Sigmoid colon (tissue), 7 donors: ENCODE measurements at regions of chr20 and their contacts with region 1.

Region 1: DNA sequence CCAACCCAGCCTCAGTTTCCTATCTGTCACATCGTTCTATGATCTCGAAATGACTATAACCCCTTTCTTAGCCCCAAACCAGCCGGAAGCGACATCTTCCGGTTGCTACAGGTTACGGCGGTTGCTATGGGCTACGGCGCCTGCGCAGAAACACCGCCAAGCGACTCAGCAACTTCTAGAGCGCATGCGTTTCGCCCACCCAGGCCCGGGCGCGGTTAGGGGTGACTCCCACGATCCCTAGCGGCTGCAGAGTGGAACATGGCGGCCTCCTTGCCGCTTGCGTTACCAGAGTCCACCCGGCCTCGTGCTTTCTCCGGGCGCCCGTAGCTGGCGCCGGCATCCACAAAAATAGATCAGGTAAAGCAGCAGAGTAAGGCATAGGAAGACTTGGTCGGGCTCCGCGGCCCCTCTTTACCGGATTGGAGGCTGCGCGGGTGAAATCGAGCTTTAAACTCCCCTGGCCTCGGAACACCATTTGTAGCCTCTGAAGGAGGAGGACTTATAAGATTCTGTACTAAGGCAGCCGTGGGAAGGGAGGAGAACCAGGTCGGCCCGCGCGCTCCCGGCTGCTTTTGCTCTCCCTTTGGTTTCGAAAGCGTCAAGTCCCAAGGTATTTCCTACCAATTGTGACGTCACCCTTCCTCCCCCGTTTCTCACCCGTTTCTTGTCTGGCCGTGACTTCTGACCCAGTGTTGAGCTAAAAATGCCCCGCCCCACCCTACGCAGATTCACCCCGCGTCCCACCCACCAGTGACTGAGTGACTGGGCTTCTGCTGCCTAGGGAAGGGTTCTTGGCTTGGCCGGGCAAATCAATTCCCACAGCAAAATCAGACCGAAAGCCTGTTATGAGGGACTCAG is 3.5 kb downstream of the SDCBP2 start:
- DNase-seq: peak; percentile 99
- H3K4me3 ChIP-seq: peak overlapping the region; percentile 87 to 90 (median 89)
- H3K27ac ChIP-seq: peak overlapping the region; percentile 97 to 99 (median 98)
- H3K4me1 ChIP-seq: peaks cover 0 to 49% (median 47%) of the 10 kb centered on the region in 4 donors
- H3K27me3 ChIP-seq: no peaks in the 10 kb centered on the region
- CTCF ChIP-seq: peak in 3 of 4 experiments; percentile 27 to 43 (median 33)
- EP300 ChIP-seq: peak in 1 of 4 donors; percentile 79
- POLR2A ChIP-seq: peak; percentile 83 to 89

Region 2: DNA sequence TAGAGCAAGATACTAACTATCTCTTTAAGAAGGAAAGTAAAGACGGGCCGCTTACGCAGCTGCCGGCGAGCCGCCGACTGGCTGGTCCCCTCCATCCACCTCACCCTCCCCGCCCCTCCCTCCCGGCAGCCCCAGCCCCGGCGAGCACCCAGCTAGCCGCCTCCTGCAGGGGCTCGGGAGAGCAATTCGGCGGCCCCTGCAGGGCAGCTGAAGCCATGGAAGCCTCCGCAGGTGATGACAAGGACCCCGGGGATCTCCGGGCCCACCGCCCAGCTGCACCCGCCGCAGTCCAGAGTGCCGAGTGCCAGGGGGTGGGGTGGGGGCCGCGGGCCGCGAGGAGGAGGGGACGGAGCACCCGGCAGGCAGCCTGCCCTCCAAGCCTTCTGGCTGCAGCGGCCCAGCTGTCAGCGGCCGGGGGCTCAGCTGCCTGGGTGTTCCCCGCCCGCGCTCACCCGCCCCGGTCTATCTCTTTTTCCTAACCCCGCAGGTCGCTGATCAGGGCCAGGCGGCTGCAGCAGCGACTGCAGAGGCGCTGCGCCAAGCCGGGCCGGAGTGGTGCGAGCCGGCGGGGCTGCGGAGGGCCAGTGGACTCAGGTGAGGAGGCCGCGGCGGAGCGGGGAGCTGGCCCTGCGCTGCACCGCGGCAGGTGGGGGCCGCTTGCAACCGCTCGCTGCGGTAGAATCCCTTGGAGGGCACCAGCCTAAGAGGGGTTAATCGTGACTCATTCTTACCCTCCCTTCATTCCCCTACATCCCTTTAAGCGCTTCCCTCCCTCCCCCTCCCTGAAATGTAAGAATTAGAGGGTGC is 59.0 kb before region 1 on chr20 and contains the start of gene SNPH:
- intact Hi-C with region 1: loop called (anchors 2 kb)
- DNase-seq: peak; percentile 91
- H3K4me3 ChIP-seq: peak within 1 kb of the TSS; percentile 76 to 91 (median 88)
- H3K27ac ChIP-seq: peak within 1 kb of the TSS; percentile 73 to 87 (median 78)
- H3K4me1 ChIP-seq: peaks cover 0 to 22% (median 17%) of the 10 kb centered on the region in 4 donors
- H3K27me3 ChIP-seq: no peaks in the 10 kb centered on the region
- CTCF ChIP-seq: no peak
- EP300 ChIP-seq: no peak
- POLR2A ChIP-seq: no peak
- total RNA-seq, gene SNPH: 6.4 to 21.0 (median 8.9) TPM

Region 3: GRCh38 chr20:1291191-1291741 is 34.1 kb before region 1 on chr20:
- intact Hi-C with region 1: no loop called
- DNase-seq: no peak
- H3K4me3 ChIP-seq: no peak overlapping the region
- H3K27ac ChIP-seq: no peak overlapping the region
- H3K4me1 ChIP-seq: no peaks in the 10 kb centered on the region
- H3K27me3 ChIP-seq: no peaks in the 10 kb centered on the region
- CTCF ChIP-seq: no peak
- EP300 ChIP-seq: no peak
- POLR2A ChIP-seq: no peak

Region 4: DNA sequence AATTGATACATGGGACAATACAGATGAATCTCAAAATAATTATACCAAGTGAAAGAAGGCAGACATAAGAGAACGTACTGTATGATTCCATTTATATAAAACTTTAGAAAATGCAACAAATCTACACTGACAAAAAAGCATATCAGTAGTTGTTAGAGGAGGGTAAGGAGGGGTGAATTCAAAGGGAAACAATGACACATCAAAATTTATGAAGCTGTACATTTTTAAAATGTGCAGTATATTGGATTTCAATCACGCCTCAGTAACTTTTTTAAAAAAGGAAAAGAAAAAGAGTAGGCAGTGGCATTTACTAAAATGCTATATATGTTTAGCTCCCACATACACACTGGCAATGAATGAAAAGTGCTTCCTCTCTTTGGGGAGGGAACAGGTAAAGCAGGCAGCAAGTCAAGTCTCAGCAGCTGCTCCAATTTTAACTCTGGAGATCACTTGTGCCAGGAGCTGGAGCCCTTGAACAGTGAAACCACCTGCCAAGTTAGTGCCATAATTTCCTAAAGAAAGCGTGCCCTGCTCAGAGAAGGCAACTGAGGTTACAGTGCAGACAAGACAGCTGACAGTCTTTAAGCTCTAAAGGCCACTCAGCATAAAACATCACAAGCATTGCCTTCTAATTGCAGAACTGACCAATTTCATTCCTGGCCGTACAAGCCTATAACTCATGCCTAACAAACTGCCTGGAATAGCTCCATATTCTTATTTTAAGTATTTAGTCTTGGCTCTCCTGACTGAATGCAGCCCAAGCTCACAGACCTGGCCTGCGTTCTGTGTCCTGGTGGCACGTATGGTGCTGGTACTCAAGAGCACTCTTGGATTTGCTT is 56.6 kb after region 1 on chr20:
- intact Hi-C with region 1: loop called (anchors 2 kb)
- DNase-seq: no peak
- H3K4me3 ChIP-seq: no peak overlapping the region
- H3K27ac ChIP-seq: peak overlapping the region; percentile 46 to 67 (median 58)
- H3K4me1 ChIP-seq: peaks cover 0 to 72% (median 52%) of the 10 kb centered on the region in 4 donors
- H3K27me3 ChIP-seq: no peaks in the 10 kb centered on the region
- CTCF ChIP-seq: no peak
- EP300 ChIP-seq: no peak
- POLR2A ChIP-seq: no peak

Region 5: GRCh38 chr20:1392823-1393506 is 67.6 kb after region 1 on chr20 and contains the start of gene FKBP1A:
- intact Hi-C with region 1: loop called (anchors 1 kb)
- DNase-seq: peak; percentile 96
- H3K4me3 ChIP-seq: peak within 1 kb of the TSS; percentile 62 to 89 (median 83)
- H3K27ac ChIP-seq: peak within 1 kb of the TSS; percentile 81 to 83 (median 82)
- H3K4me1 ChIP-seq: peaks cover 0 to 53% (median 45%) of the 10 kb centered on the region in 4 donors
- H3K27me3 ChIP-seq: peaks cover 0 to 9% (median 0%) of the 10 kb centered on the region in 3 donors
- CTCF ChIP-seq: peak in 1 of 4 experiments; percentile 16
- EP300 ChIP-seq: no peak
- POLR2A ChIP-seq: peak; percentile 35 to 40
- total RNA-seq, gene FKBP1A: 71.7 to 118 (median 85.3) TPM

Region 6: GRCh38 chr20:1415667-1416468 is 90.5 kb after region 1 on chr20:
- intact Hi-C with region 1: no loop called
- DNase-seq: no peak
- H3K4me3 ChIP-seq: no peak overlapping the region
- H3K27ac ChIP-seq: no peak overlapping the region
- H3K4me1 ChIP-seq: no peaks in the 10 kb centered on the region
- H3K27me3 ChIP-seq: peaks cover 0 to 6% (median 0%) of the 10 kb centered on the region in 3 donors
- CTCF ChIP-seq: no peak
- EP300 ChIP-seq: no peak
- POLR2A ChIP-seq: no peak

Region 7: DNA sequence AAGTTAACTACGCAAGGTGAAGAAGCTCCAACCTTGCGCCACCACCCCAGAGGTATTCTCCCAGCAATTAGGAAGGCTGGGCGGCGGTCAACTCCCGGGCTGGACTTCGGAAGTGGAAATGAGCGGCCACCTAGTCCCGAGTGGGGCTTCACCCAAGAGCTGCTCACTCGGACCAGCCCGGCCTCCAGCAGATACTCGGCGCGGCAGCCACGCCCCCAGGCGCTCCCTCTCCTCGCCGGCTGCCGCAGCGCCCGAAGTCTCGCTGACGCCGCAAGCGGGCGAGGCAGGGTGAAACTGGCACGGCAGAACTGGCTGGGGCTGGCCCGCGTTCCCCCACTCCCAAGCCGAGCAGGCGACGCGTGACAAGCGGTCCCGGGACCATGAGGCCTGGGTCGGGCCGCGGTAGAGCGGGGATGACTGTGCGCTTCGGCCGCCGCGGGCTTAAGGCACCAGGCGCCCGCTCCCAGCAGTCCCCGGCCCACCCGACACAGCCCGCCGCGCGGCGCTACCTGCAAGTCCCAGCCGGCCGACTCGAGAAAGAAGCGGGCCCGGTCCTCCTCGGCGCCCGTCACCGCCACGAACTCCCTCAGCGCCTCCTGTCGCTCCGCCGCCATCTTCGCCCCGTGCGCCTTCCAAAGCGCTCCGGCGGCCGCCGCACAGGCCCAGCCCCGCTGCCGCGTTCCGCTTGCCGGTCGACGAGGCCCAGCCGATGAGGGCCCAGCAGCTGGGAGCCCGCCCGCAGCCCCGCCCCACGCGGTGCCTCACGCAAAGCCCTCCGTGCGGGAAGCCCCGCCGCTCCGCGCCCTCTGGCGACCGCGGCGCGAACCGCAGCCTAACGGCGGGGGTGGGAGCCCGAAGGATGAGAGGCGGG is 141.0 kb after region 1 on chr20 and contains the start of gene NSFL1C:
- intact Hi-C with region 1: loop called (anchors 2 kb)
- DNase-seq: peak; percentile 96
- H3K4me3 ChIP-seq: peak within 1 kb of the TSS; percentile 77 to 97 (median 92)
- H3K27ac ChIP-seq: peak within 1 kb of the TSS; percentile 84 to 89 (median 87)
- H3K4me1 ChIP-seq: peaks cover 0 to 45% (median 35%) of the 10 kb centered on the region in 4 donors
- H3K27me3 ChIP-seq: no peaks in the 10 kb centered on the region
- CTCF ChIP-seq: peak; percentile 49 to 98 (median 66)
- EP300 ChIP-seq: no peak
- POLR2A ChIP-seq: peak; percentile 32 to 35
- total RNA-seq, gene NSFL1C: 33.5 to 46.5 (median 40.5) TPM

Region 8: DNA sequence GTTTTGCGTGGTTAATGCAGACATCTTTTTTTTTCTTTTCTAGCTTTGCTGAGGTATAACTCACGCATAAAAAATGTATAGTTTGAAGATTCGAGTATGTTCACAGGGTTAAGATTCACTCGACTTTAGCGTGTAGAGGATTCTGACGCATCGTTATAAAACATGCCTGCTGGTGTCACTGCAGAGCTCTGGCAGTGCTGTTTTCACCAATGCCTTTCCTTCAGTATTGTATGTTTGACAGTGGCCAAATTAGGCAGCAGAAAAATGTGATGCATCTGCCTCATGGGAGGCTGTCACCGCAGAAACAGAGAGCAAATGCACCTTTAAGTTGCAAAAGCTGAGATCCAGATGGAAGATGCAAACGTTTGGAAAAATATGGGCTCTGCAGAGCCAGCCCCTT is 183.8 kb after region 1 on chr20:
- intact Hi-C with region 1: no loop called
- DNase-seq: no peak
- H3K4me3 ChIP-seq: no peak overlapping the region
- H3K27ac ChIP-seq: no peak overlapping the region
- H3K4me1 ChIP-seq: no peaks in the 10 kb centered on the region
- H3K27me3 ChIP-seq: peaks cover 0 to 7% (median 0%) of the 10 kb centered on the region in 3 donors
- CTCF ChIP-seq: no peak
- EP300 ChIP-seq: no peak
- POLR2A ChIP-seq: no peak